Right ventricle myocardium inferior (tissue), 1 donor: ENCODE measurements at regions of chr17 and their contacts with region 1.

Region 1: DNA sequence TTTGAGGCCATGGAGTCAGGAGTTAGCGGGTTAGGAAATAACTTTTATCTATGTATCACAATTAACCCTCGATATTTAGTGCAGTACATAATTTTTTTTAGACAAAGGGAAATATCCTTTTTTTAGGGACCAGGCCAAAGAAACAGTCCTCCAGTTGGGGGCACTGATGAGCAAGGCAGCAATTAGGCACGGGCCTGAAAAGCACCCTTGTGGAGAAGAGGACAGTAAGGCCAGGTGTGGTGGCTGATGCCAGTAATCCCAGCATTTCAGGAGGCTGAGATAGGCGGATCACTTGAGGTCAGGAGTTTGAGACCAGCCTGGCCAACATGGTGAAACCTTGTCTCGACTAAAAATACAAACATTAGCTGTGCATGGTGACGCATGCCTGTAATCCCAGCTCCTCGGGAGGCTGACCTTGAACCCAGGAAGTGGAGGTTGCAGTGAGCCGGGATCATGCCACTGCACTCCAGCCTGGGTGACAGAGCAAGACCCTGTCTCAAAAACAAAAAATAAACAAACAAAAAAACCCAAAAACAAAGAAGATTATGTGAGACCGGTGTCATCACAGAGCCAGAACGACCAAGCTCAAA is 158.3 kb upstream of the NOL11 start:
- DNase-seq: no peak
- ATAC-seq: no peak

Region 2: DNA sequence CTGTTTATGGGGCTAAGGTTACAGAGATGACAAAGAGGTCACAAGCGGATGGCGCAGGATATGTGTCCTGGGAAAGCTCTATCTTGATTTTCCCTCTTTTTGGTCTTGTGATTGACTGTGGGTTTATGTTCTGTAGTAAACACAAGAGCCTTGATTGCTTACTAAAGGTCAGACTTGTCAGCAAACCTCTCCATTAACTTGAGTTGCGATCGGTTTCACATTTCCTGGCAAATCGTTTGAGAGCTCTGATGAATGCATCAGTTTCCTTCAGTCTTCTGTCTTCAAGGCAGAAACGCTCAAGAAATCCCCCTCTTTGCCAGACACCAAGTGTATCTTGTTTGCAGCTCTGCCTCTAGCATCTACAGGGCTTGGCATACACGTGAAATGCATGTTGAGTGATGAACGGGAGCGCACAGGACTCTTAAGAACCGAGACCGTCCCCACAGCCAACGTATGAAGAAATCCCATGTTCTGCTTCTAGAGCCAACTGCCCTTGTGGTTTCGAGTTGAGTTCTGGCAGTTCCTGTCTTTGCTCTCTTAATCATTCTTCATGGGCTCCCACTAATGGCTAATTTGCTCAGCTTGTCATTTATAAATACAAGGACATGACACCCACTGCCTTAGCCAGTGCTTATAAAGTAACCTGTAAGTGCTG is 39.1 kb before region 1 on chr17:
- intact Hi-C with region 1: loop called (anchors 5 kb)
- DNase-seq: no peak
- ATAC-seq: peak; percentile 74

Region 3: GRCh38 chr17:67779098-67779672 is 219.7 kb after region 1 on chr17:
- intact Hi-C with region 1: no loop called
- DNase-seq: peak; percentile 72
- ATAC-seq: peak; percentile 89